CD8-positive, alpha-beta T cell (primary cell): ENCODE measurements at regions of chr15 and their contacts with region 1.

Region 1: GRCh38 chr15:49313650-49314049 is 109.4 kb upstream of the FGF7 start:
- DNase-seq: no peak
- ATAC-seq: no peak
- H3K4me3 ChIP-seq: no peak overlapping the region
- H3K4me3 Mint-ChIP-seq: no peak overlapping the region
- H3K27ac ChIP-seq: no peak overlapping the region
- H3K27ac Mint-ChIP-seq: no peak overlapping the region
- H3K4me1 ChIP-seq: no peaks in the 10 kb centered on the region
- H3K4me1 Mint-ChIP-seq: peaks cover 2% of the 10 kb centered on the region
- H3K27me3 ChIP-seq: no peaks in the 10 kb centered on the region
- H3K27me3 Mint-ChIP-seq: no peaks in the 10 kb centered on the region
- CTCF ChIP-seq: no peak

Region 2: DNA sequence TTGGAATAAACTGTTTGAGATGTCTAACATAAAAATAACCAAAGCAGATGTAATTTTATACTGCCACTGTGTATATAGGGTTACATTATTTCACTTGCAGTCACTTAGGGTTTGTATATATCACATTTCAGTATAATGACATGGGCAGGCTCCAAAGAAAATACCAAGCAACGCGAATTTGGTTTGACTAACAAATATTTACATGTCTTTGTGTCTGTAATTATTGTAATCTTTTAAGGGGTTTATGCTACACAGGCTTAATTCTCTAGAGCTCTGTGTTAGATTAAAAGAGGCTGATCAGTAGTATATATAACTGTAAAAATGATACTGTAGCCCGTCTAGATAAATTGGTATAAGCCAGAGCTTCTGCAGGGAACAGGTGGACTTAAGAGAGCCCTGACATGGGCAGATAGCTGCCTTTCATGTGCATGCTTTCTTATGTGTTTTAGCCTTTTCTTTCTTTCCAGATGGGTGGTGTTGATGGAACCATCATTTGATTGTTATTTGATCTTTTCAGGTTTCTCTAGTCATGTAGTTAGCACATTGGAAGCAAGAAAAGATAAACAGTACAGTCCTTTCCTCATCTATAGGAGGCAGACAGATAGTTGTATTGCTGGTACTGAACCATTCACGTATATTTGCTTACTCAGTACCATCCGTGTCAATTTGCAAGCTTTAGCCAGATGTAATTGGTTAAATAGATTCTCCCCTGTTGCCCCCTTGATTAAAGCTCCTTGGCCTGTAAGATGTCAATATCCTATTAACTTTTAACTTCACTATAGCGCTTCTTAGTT is 57.5 kb before region 1 on chr15:
- CTCF ChIA-PET with region 1: no interaction called
- POLR2A ChIA-PET with region 1: no interaction called
- intact Hi-C with region 1: loop called in 1 of 2 experiments (anchors 10 kb)
- DNase-seq: no peak
- ATAC-seq: no peak
- H3K4me3 ChIP-seq: no peak overlapping the region
- H3K4me3 Mint-ChIP-seq: no peak overlapping the region
- H3K27ac ChIP-seq: no peak overlapping the region
- H3K27ac Mint-ChIP-seq: no peak overlapping the region
- H3K4me1 ChIP-seq: no peaks in the 10 kb centered on the region
- H3K4me1 Mint-ChIP-seq: no peaks in the 10 kb centered on the region
- H3K27me3 ChIP-seq: no peaks in the 10 kb centered on the region
- H3K27me3 Mint-ChIP-seq: no peaks in the 10 kb centered on the region
- CTCF ChIP-seq: no peak